H1 (cell line): ENCODE measurements at regions of chr7 and their contacts with region 1.

Region 1: DNA sequence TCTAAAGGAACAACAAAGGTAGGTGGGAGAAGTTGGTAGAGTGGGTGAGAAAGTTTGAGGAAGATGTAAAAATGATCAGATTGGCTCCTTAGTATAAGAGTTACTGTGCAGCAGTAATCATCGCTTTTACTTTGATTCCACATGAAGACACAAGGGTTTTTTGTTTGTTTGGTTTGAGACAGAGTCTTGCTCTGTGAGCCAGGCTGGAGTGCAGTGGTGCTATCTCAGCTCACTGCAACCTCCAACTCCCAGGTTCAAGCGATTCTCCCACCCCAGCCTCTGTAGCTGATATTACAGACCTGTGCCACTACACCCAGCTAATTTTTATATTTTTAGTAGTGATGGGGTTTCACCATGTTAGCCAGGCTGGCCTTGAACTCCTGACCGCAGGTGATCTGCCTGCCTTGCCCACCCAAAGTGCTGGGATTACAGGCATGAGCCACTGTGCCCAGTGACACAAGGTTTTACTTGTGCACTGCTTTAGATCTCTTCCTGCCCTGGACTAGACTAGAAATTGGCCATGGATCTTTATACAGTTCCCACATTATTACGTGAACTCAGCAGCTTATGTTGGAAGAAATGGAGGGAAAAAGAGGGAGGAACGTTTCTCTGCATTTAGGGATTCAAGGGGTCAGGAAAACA is 10.7 kb downstream of the LUC7L2 start:
- DNase-seq: no peak
- H3K4me3 ChIP-seq: no peak overlapping the region
- H3K27ac ChIP-seq: peak overlapping the region; percentile 0; the same call in 1 of the 2 replicates
- H3K4me1 ChIP-seq: peaks cover 0 to 9% (median 2%) of the 10 kb centered on the region in 4 experiments; a peak in 3 of 7 replicates
- H3K27me3 ChIP-seq: no peaks in the 10 kb centered on the region
- CTCF ChIP-seq: no peak
- EP300 ChIP-seq: no peak
- POLR2A ChIP-seq: 0 out of 3 replicates have a peak, but pooled peaks of 1 of the 2 experiments have one; percentile 13
- RAD21 ChIP-seq: no peak

Region 2: DNA sequence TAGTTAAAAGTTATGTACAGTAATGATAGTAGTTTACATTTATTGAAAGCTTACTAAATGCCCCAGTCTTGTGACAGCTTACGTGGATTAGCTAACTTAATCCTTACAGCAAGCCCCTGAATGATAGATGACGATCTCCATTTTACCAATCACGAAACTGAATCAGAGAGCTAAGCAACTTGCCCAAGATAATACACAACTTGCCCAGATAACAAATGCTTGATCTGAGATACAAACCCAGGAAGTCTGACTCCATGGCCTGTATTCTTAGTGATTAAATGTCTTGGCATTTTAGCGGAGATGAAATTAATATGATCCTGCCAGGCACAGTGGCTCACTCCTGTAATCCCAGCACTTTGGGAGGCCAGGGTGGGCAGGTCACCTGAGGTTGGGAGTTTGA is 76.2 kb before region 1 on chr7:
- CTCF ChIA-PET with region 1: no interaction called
- POLR2A ChIA-PET with region 1: no interaction called
- DNase-seq: no peak
- H3K4me3 ChIP-seq: no peak overlapping the region
- H3K27ac ChIP-seq: no peak overlapping the region
- H3K4me1 ChIP-seq: no peaks in the 10 kb centered on the region
- H3K27me3 ChIP-seq: no peaks in the 10 kb centered on the region
- CTCF ChIP-seq: no peak
- EP300 ChIP-seq: no peak
- POLR2A ChIP-seq: no peak
- RAD21 ChIP-seq: no peak

Region 3: GRCh38 chr7:139304517-139304916 is 65.9 kb before region 1 on chr7:
- CTCF ChIA-PET with region 1: no interaction called
- POLR2A ChIA-PET with region 1: no interaction called
- DNase-seq: no peak
- H3K4me3 ChIP-seq: no peak overlapping the region
- H3K27ac ChIP-seq: no peak overlapping the region
- H3K4me1 ChIP-seq: no peaks in the 10 kb centered on the region
- H3K27me3 ChIP-seq: no peaks in the 10 kb centered on the region
- CTCF ChIP-seq: no peak
- EP300 ChIP-seq: no peak
- POLR2A ChIP-seq: no peak
- RAD21 ChIP-seq: no peak

Region 4: GRCh38 chr7:139359366-139360209 is 10.8 kb before region 1 on chr7 and contains the start of gene LUC7L2:
- CTCF ChIA-PET with region 1: interaction called, 3 read pairs
- POLR2A ChIA-PET with region 1: interaction called, 40 read pairs
- DNase-seq: peak; percentile 96 to 99
- H3K4me3 ChIP-seq: peak within 1 kb of the TSS; percentile 88 to 99 (median 94)
- H3K27ac ChIP-seq: peak within 1 kb of the TSS; percentile 94
- H3K4me1 ChIP-seq: peaks cover 5 to 9% (median 7%) of the 10 kb centered on the region in 4 experiments
- H3K27me3 ChIP-seq: no peaks in the 10 kb centered on the region
- CTCF ChIP-seq: peak in 1 of 3 experiments; percentile 14; a peak in 1 of 4 replicates
- EP300 ChIP-seq: no peak
- POLR2A ChIP-seq: peak; percentile 90 to 95
- RAD21 ChIP-seq: no peak; a peak in 1 of 4 replicates
- total RNA-seq, gene LUC7L2: 64.1 and 67.8 TPM in 2 replicates

Region 5: DNA sequence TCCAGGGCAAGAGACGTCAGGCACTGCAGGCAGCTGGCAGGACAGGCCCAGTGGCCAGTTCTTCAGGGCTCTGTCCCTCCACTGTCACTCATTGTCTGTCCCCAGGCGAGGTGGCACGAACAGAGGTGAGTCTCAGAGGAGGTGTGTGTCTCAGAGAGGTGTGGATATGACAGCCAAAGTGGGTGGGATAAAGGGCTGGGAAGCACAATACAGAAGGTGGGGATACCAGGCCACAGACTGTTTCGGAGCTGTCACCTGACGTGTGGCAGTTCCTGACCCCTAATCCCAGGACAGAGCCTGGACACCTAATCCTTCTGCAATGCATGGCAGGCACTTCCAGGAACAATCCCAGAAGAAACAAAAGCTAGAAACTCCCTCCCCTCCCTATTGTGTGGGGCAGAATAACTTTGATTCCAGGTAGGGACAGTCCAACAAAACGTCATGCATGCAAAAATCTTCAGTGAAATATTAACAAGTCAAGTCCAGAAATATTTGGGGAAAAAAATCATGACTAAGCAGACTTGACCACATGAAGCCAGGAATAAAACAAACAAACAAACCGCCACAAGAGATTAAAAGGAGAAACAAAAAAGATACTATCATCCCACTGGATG is 101.4 kb after region 1 on chr7:
- CTCF ChIA-PET with region 1: no interaction called
- POLR2A ChIA-PET with region 1: no interaction called
- DNase-seq: no peak
- H3K4me3 ChIP-seq: no peak overlapping the region
- H3K27ac ChIP-seq: peak overlapping the region; percentile 45; the same call in 1 of the 2 replicates
- H3K4me1 ChIP-seq: no peaks in the 10 kb centered on the region; a peak in 2 of 7 replicates
- H3K27me3 ChIP-seq: no peaks in the 10 kb centered on the region
- CTCF ChIP-seq: no peak
- EP300 ChIP-seq: no peak
- POLR2A ChIP-seq: no peak
- RAD21 ChIP-seq: no peak